CD4-positive, alpha-beta T cell (primary cell): ENCODE measurements at regions of chr19 and their contacts with region 1.

Region 1: DNA sequence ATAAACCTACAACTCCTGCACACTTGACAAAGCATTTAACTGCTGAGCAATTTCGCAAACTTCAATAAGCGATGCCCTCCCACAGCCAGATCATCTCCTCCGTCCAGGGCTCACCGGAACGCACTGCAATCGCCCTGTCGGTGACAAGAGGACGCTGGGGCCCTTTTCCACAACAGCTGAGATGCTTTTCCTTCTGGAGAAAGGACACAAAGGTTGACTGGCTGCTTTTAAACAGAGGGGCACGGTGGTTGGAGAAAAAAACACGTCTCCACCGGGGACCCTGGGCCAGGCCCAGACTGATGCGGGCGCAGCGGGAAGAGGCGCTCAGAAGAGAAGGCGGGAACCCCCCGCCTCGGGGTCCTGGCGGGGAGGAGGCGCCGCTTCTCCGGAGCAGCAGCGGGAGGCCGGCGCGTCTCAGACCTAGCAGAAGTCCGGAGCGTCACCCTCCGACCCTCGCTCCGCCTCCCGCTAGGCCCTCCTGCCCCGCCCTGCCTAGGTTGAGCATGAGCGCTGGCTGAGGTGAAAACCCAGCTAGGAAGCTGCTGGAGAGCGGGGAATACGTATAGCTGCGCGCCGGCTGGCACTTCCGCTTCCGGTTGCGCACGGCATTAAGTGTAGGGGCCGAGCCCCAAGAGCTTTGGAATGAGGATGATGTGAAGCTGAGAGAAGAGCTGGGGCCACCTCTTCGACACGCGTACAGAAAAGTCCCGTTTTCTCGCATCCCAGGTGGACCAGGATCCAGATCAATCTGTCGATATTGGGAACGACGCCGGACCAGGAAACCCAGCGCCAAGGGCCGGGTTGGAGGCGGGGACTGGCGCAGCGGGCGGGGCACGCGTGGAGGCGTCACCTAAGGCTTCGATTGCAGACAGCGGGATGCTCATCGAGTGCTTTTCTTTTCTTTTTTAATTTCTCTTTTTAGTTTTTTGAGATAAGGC is at the start of gene ZNF846:
- DNase-seq: peak; percentile 88 to 96 (median 90)
- ATAC-seq: peak; percentile 96
- H3K4me3 ChIP-seq: peak within 1 kb of the TSS; percentile 69
- H3K4me3 Mint-ChIP-seq: peak within 1 kb of the TSS; percentile 94
- H3K27ac ChIP-seq: peak within 1 kb of the TSS; percentile 93 to 94
- H3K27ac Mint-ChIP-seq: peak within 1 kb of the TSS; percentile 97
- H3K4me1 ChIP-seq: peaks cover 23% of the 10 kb centered on the region
- H3K4me1 Mint-ChIP-seq: peaks cover 12% of the 10 kb centered on the region
- H3K27me3 ChIP-seq: no peaks in the 10 kb centered on the region
- H3K27me3 Mint-ChIP-seq: no peaks in the 10 kb centered on the region
- CTCF ChIP-seq: no peak
- total RNA-seq, gene ZNF846: 7.9 to 8.5 TPM

Region 2: DNA sequence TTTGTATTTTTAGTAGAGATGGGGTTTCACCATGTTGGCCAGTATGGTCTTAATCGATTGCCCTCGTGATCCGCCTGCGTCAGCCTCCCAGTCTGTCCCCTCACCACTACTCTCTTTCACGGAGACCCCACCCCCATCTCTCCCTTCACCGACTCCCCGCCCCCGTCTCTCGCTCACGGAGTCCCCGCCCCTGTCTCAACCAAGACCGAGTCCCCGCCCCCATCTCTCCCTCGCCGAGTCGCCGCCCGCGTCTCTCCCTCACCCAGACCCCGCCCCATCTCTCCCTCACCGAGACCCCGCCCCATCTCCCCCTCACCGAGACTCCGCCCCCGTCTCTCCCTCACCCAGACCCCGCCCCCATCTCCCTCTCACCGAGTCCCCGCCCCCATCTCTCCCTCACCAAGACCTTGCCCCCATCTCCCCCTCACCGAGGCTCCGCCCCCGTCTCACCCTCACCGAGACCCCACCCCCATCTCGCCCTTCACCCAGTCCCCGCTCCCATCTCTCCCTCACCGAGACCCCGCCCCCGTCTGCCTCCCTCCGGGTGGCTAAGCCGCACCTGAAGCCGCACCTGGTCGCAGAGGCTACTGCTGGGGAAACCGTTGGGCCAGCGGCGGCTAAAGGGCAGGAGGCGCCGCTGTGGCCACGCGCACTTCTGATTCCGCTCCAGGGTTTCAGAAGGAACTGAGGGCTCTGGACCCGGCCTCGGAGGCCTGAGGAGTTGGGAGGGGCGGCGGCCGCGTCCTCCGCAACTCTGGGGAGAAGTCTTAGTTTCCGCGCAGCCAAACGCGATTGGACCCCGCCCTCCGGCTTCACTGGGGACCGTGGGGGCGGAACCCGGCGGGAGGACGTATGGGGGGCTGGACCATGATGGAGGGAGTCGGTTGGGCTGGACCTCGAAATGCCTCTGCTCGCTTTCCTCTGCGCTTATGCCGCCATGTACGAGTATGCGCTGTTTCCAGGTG is 17.2 kb after region 1 on chr19:
- CTCF ChIA-PET with region 1: no interaction called
- POLR2A ChIA-PET with region 1: interaction called, 7 read pairs
- intact Hi-C with region 1: loop called (anchors 1 to 2 kb)
- DNase-seq: peak; percentile 92 to 99 (median 98)
- ATAC-seq: peak; percentile 84
- H3K4me3 ChIP-seq: peak overlapping the region; percentile 69
- H3K4me3 Mint-ChIP-seq: peak overlapping the region; percentile 94
- H3K27ac ChIP-seq: peak overlapping the region; percentile 87 to 92
- H3K27ac Mint-ChIP-seq: peak overlapping the region; percentile 91
- H3K4me1 ChIP-seq: peaks cover 19% of the 10 kb centered on the region
- H3K4me1 Mint-ChIP-seq: peaks cover 31% of the 10 kb centered on the region
- H3K27me3 ChIP-seq: no peaks in the 10 kb centered on the region
- H3K27me3 Mint-ChIP-seq: no peaks in the 10 kb centered on the region
- CTCF ChIP-seq: no peak

Region 3: GRCh38 chr19:9818734-9819589 is 50.5 kb after region 1 on chr19 and contains the start of gene FBXL12:
- CTCF ChIA-PET with region 1: no interaction called
- POLR2A ChIA-PET with region 1: interaction called, 6 read pairs
- intact Hi-C with region 1: loop called in 1 of 2 experiments (anchors 5 kb)
- DNase-seq: peak; percentile 100
- ATAC-seq: peak; percentile 90
- H3K4me3 ChIP-seq: peak within 1 kb of the TSS; percentile 95
- H3K4me3 Mint-ChIP-seq: peak within 1 kb of the TSS; percentile 95
- H3K27ac ChIP-seq: peak within 1 kb of the TSS; percentile 97 to 100
- H3K27ac Mint-ChIP-seq: peak within 1 kb of the TSS; percentile 92
- H3K4me1 ChIP-seq: peaks cover 25% of the 10 kb centered on the region
- H3K4me1 Mint-ChIP-seq: peaks cover 37% of the 10 kb centered on the region
- H3K27me3 ChIP-seq: no peaks in the 10 kb centered on the region
- H3K27me3 Mint-ChIP-seq: no peaks in the 10 kb centered on the region
- CTCF ChIP-seq: no peak
- total RNA-seq, gene FBXL12: 33.4 to 38.4 TPM

Region 4: GRCh38 chr19:9827289-9828238 is 59.1 kb after region 1 on chr19 and contains the start of gene UBL5:
- CTCF ChIA-PET with region 1: no interaction called
- POLR2A ChIA-PET with region 1: interaction called, 23 read pairs
- intact Hi-C with region 1: no loop called
- DNase-seq: peak; percentile 81 to 95 (median 87)
- ATAC-seq: peak; percentile 97
- H3K4me3 ChIP-seq: peak within 1 kb of the TSS; percentile 98
- H3K4me3 Mint-ChIP-seq: peak within 1 kb of the TSS; percentile 100
- H3K27ac ChIP-seq: peak within 1 kb of the TSS; percentile 44 to 77
- H3K27ac Mint-ChIP-seq: peak within 1 kb of the TSS; percentile 90
- H3K4me1 ChIP-seq: peaks cover 32% of the 10 kb centered on the region
- H3K4me1 Mint-ChIP-seq: peaks cover 33% of the 10 kb centered on the region
- H3K27me3 ChIP-seq: no peaks in the 10 kb centered on the region
- H3K27me3 Mint-ChIP-seq: no peaks in the 10 kb centered on the region
- CTCF ChIP-seq: no peak
- total RNA-seq, gene UBL5: 163 to 165 TPM